ENCODE measurements at regions of chr7 and their contacts with region 1.

Region 1: GRCh38 chr7:77351539-77352004 is 64.6 kb downstream of the GSAP start:
- DNase-seq: peak; percentile 29
- ATAC-seq: peak; percentile 88
- H3K4me3 Mint-ChIP-seq: peak overlapping the region; percentile 75
- H3K27ac Mint-ChIP-seq: peak overlapping the region; percentile 96
- H3K4me1 Mint-ChIP-seq: peaks cover 41% of the 10 kb centered on the region
- H3K27me3 Mint-ChIP-seq: no peaks in the 10 kb centered on the region
- CTCF ChIP-seq: no peak

Region 2: GRCh38 chr7:77226357-77226839 is 125.2 kb before region 1 on chr7:
- CTCF ChIA-PET with region 1: no interaction called
- POLR2A ChIA-PET with region 1: no interaction called
- intact Hi-C with region 1: no loop called
- DNase-seq: no peak
- ATAC-seq: no peak
- H3K4me3 Mint-ChIP-seq: no peak overlapping the region
- H3K27ac Mint-ChIP-seq: no peak overlapping the region
- H3K4me1 Mint-ChIP-seq: no peaks in the 10 kb centered on the region
- H3K27me3 Mint-ChIP-seq: no peaks in the 10 kb centered on the region
- CTCF ChIP-seq: no peak

Region 3: DNA sequence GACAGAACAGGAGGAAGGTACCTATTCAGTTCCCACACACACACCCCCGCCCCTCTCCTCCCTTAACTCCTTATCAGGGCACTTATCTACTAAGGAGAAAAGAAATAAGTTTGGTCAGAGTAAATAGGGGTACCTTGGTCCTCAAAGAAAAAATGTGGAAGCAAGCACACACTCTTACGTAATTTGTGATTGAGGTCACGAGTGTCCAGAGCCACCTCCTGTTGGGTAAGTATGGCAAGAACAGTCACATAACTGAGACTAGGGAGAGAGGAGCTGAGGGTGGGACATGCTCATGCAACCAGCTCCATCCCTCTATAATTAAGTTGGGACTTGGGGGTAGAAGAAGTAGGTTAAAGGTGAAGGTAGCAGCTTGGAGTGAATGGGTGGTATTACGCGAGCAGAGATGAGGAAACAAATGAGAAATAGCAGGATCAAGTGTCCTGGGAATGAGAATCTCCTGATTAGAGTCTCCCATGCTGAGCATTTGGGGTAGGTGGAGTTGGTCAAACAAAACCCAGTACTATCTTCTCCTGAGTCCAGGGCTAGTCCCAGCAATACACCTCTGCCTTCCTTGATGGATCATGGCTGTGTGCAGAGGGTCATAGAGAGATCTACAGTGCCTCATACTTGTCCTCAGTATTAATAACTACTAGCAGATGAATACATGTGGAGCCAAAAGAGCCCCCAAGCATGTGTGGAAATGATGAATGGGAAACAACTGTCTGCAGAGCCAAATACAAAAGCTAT is 12.5 kb before region 1 on chr7:
- CTCF ChIA-PET with region 1: no interaction called
- POLR2A ChIA-PET with region 1: no interaction called
- intact Hi-C with region 1: loop called (anchors 1 kb)
- DNase-seq: no peak
- ATAC-seq: no peak
- H3K4me3 Mint-ChIP-seq: no peak overlapping the region
- H3K27ac Mint-ChIP-seq: peak overlapping the region; percentile 78
- H3K4me1 Mint-ChIP-seq: peaks cover 54% of the 10 kb centered on the region
- H3K27me3 Mint-ChIP-seq: no peaks in the 10 kb centered on the region
- CTCF ChIP-seq: no peak

Region 4: GRCh38 chr7:77498659-77499422 is 147.3 kb after region 1 on chr7:
- CTCF ChIA-PET with region 1: no interaction called
- POLR2A ChIA-PET with region 1: no interaction called
- intact Hi-C with region 1: no loop called
- DNase-seq: no peak
- ATAC-seq: no peak
- H3K4me3 Mint-ChIP-seq: no peak overlapping the region
- H3K27ac Mint-ChIP-seq: no peak overlapping the region
- H3K4me1 Mint-ChIP-seq: no peaks in the 10 kb centered on the region
- H3K27me3 Mint-ChIP-seq: no peaks in the 10 kb centered on the region
- CTCF ChIP-seq: no peak

Measured in activated B cell treated with CpG ODN at 0.5 μM for 24 hours (primary cell).